ENCODE measurements at regions of chr18 and their contacts with region 1.

Region 1: DNA sequence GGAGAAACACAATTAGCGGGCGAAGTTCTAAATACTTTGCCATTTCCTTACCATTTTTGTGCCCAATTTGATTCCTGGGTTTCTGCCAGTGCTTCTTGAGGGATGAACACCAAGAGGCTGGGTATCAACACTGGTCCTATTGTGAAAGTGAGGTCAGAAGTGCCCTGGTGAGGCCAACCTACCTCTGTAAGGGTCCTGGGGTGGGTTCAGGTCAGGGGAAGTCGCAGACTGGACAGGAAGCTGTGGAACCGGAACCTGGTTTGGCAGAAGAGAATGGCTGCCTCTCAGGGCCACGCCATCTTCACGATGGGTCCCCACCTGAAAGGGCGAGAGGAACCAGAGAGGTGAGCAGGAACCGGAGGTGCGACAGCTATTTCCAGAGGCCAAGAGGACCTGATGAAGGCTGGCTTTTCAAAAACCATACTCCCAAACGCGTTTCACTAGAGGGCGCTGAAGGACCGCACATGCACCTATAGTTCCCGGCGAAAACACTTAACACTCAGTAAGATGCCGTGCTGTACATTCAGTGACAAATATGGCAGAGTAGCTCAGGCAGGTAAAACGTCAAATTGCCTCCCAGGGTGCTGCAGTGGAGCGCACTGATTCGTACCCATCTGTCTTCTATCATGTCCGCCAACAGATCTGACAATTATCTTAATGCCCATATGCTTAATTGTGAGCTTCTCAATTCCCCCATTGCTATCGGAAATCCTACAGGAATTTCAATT is 275.3 kb upstream of the CCDC68 start:
- DNase-seq: peak; percentile 60 to 85
- ATAC-seq: peak; percentile 59 to 92 (median 86)
- H3K4me3 ChIP-seq: peak overlapping the region in 1 of 10 donors; percentile 3
- H3K27ac ChIP-seq: peak overlapping the region; percentile 39 to 89 (median 62)
- H3K4me1 ChIP-seq: peaks cover 3 to 63% (median 42%) of the 10 kb centered on the region in 9 donors
- H3K27me3 ChIP-seq: no peaks in the 10 kb centered on the region
- CTCF ChIP-seq: peak; percentile 59 to 84 (median 76)

Region 2: GRCh38 chr18:55337908-55338521 is 103.5 kb after region 1 on chr18:
- intact Hi-C with region 1: loop called in 2 of 10 experiments (anchors 5 kb)
- DNase-seq: peak; percentile 34 to 53
- ATAC-seq: peak; percentile 70 to 88 (median 80)
- H3K4me3 ChIP-seq: peak overlapping the region in 7 of 10 donors; percentile 9 to 39 (median 14)
- H3K27ac ChIP-seq: peak overlapping the region; percentile 18 to 91 (median 80)
- H3K4me1 ChIP-seq: peaks cover 2 to 76% (median 56%) of the 10 kb centered on the region in 9 donors
- H3K27me3 ChIP-seq: no peaks in the 10 kb centered on the region
- CTCF ChIP-seq: no peak

Region 3: DNA sequence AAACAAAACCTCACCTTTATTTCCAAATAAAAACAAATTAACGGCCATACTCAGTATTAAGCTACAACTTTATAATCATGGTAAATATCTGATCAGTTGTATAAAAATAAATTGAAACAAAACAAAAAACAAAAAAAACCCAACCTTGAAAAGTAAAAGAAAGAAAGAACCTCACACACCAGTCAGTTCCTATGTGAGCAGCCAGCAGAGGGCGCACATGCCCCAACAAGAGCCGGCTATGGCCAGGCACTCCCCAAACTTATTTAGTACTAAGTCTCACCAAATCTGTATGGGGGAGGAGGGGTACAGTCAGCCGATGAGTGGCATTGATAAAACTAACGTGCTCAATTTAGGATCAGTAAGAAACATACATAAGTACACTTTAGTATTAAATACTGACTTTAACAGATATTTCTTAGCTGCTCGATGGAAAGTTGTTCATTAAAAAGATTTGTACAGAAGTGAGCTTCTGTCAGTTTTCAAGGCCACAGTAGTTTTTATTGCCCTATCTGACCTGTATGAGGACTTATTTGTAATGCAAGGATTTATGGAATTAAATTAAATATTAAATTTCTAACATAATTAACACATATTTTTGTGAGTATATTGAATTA is 180.8 kb after region 1 on chr18:
- intact Hi-C with region 1: loop called in 3 of 10 experiments (anchors 5 to 10 kb)
- DNase-seq: peak; percentile 88 to 91
- ATAC-seq: peak; percentile 87 to 93 (median 90)
- H3K4me3 ChIP-seq: no peak overlapping the region
- H3K27ac ChIP-seq: peak overlapping the region in 5 of 10 donors; percentile 14 to 91 (median 54)
- H3K4me1 ChIP-seq: peaks cover 0 to 78% (median 56%) of the 10 kb centered on the region in 9 donors
- H3K27me3 ChIP-seq: no peaks in the 10 kb centered on the region
- CTCF ChIP-seq: peak; percentile 82 to 98 (median 92)

Region 4: DNA sequence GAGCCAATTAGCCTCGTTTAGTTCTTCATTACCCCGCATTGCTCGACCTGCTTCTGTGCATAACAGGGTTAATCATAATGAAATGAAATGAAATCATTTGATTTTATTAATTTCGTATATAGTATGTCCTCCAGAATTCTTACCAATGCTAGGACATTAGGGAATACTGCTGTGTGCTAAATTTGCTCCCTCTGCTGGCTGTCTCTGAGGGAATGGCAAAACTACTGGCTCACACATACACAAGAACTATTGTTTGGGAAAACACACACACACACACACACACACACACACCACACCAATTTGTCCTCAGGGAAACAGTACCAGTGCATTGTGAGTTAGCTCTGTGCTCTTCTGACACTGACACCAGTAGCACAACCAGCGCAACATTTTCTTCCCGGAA is 626.7 kb after region 1 on chr18:
- intact Hi-C with region 1: loop called in 5 of 10 experiments (anchors 10 kb)
- DNase-seq: no peak
- ATAC-seq: peak in 2 of 8 donors; percentile 33 to 51
- H3K4me3 ChIP-seq: no peak overlapping the region
- H3K27ac ChIP-seq: no peak overlapping the region
- H3K4me1 ChIP-seq: peaks cover 0 to 30% (median 14%) of the 10 kb centered on the region in 9 donors
- H3K27me3 ChIP-seq: no peaks in the 10 kb centered on the region
- CTCF ChIP-seq: peak in 7 of 9 donors; percentile 38 to 58 (median 45)

Region 5: DNA sequence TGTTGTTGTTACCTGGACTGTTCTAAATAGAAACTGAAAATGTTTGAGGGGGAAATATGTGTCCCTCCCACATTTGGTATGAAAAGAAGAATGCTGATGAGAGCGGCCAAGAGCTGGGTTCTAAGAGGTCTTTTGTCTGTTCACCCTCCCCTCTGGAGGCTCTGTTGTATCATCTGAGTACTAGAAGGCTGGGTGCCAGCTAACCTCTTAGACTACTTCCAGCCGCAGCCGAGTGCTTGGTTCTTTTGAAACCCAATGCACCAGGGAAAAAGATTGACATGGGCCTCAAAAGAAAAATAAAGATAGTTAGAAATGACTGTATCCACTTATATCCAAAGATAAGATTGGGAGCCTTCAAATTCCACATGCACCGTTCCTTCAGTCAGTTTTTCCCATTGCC is 1148.0 kb after region 1 on chr18:
- intact Hi-C with region 1: loop called in 1 of 10 experiments (anchors 10 kb)
- DNase-seq: peak in 1 of 2 donors; percentile 40
- ATAC-seq: peak in 6 of 8 donors; percentile 55 to 83 (median 60)
- H3K4me3 ChIP-seq: no peak overlapping the region
- H3K27ac ChIP-seq: no peak overlapping the region
- H3K4me1 ChIP-seq: peaks cover 0 to 10% (median 4%) of the 10 kb centered on the region in 9 donors
- H3K27me3 ChIP-seq: no peaks in the 10 kb centered on the region
- CTCF ChIP-seq: peak in 1 of 9 donors; percentile 11